Caco-2 (cell line): ENCODE measurements at regions of chr14 and their contacts with region 1.

Region 1: GRCh38 chr14:106844608-106845285 is 1318.4 kb downstream of the TMEM121 start:
- DNase-seq: peak; percentile 55 to 76
- H3K4me3 ChIP-seq: peak overlapping the region; percentile 53
- H3K4me3 Mint-ChIP-seq: peak overlapping the region; percentile 96
- H3K27ac Mint-ChIP-seq: peak overlapping the region; percentile 80
- H3K4me1 ChIP-seq: peaks cover 26% of the 10 kb centered on the region
- H3K4me1 Mint-ChIP-seq: peaks cover 39% of the 10 kb centered on the region
- H3K27me3 ChIP-seq: no peaks in the 10 kb centered on the region
- H3K27me3 Mint-ChIP-seq: no peaks in the 10 kb centered on the region
- CTCF ChIP-seq: no peak

Region 2: GRCh38 chr14:106790189-106791036 is 54.3 kb before region 1 on chr14:
- CTCF ChIA-PET with region 1: no interaction called
- POLR2A ChIA-PET with region 1: no interaction called
- intact Hi-C with region 1: no loop called
- DNase-seq: peak; percentile 86 to 90
- H3K4me3 ChIP-seq: no peak overlapping the region
- H3K4me3 Mint-ChIP-seq: no peak overlapping the region
- H3K27ac Mint-ChIP-seq: no peak overlapping the region
- H3K4me1 ChIP-seq: no peaks in the 10 kb centered on the region
- H3K4me1 Mint-ChIP-seq: no peaks in the 10 kb centered on the region
- H3K27me3 ChIP-seq: no peaks in the 10 kb centered on the region
- H3K27me3 Mint-ChIP-seq: peaks cover 7% of the 10 kb centered on the region
- CTCF ChIP-seq: peak; percentile 71 to 84

Region 3: DNA sequence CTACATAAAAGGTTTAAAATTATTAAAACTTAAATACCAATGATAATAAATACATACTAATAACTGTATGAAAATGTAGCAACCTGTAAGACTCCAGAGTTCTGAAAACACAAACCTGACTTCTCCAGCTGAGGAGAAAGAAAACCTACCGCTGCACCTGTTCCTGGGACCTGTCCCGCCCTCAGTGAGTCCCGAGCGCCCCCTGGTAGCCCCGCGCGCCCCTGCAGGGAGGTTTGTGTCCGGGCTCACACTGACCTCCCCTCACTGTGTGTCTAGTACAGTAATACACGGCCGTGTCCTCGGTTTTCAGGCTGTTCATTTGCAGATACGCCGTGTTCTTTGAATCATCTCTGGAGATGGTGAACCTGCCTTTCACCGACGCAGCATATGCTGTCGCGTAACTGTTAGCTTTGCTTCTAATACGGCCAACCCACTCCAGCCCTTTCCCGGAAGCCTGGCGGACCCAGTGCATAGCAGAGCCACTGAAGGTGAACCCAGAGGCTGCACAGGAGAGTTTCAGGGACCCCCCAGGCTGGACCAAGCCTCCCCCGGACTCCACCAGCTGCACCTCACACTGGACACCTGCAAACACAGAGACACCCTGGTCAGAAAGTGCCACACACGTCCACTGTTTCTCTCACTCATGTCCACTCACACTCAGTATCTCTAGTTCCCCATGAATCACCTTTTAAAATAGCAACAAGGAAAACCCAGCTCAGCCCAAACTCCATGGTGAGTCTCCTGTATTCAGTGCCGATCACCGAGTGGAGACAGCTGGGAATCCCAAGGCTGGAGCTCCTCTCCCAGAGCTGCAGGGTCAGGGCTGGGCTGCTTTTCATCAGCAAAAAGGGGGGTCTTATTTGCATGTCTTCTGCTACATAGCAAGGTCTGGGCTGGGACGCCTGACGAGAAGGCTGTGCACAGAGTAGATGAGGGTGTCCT is 42.1 kb before region 1 on chr14:
- CTCF ChIA-PET with region 1: no interaction called
- POLR2A ChIA-PET with region 1: no interaction called
- intact Hi-C with region 1: loop called (anchors 1 kb)
- DNase-seq: peak; percentile 74 to 84
- H3K4me3 ChIP-seq: peak overlapping the region; percentile 33
- H3K4me3 Mint-ChIP-seq: peak overlapping the region; percentile 68
- H3K27ac Mint-ChIP-seq: no peak overlapping the region
- H3K4me1 ChIP-seq: no peaks in the 10 kb centered on the region
- H3K4me1 Mint-ChIP-seq: no peaks in the 10 kb centered on the region
- H3K27me3 ChIP-seq: no peaks in the 10 kb centered on the region; the same call in 1 of the 2 replicates
- H3K27me3 Mint-ChIP-seq: peaks cover 10% of the 10 kb centered on the region
- CTCF ChIP-seq: peak; percentile 74 to 81

Region 4: DNA sequence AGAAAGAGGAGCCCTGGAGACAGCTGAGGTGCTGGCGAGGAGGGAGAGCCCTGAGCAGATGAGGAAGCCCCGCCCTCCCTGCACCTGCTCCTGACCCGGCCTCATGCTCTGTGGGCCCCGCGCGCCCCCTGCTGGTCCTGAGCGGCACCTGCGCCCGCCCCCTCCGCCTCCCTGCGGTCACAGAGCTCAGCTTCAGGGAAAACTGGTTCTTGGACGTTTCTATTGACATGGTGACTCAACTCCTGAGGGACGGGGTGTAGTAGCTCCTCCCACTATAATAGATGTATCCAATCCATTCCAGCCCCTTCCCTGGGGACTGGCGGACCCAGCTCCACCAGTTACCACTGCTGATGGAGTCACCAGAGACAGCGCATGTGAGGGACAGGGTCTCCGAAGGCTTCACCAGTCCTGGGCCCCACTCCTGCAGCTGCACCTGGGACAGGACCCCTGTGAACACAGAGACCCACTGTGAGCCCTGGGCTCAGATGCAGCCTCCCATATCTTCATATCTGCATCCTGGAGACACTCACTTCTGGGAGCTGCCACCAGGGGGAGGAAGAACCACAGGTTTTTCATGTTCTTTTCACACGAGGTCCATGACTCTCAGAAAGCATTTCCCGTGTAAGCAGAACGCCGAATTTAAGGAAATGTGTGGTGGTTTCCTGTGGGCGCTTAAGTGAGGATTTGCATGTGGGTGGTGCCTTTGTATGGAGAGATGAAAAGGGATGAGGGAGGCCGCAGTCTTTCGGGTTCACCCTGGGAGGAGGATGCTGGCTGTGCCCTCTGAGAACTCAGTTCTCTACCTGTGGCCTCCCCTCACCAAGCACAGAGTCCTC is 28.1 kb after region 1 on chr14:
- CTCF ChIA-PET with region 1: interaction called, 23 read pairs
- POLR2A ChIA-PET with region 1: no interaction called
- intact Hi-C with region 1: loop called (anchors 1 kb)
- DNase-seq: peak; percentile 91 to 95
- H3K4me3 ChIP-seq: no peak overlapping the region
- H3K4me3 Mint-ChIP-seq: peak overlapping the region; percentile 62
- H3K27ac Mint-ChIP-seq: peak overlapping the region; percentile 48
- H3K4me1 ChIP-seq: peaks cover 36% of the 10 kb centered on the region
- H3K4me1 Mint-ChIP-seq: peaks cover 15% of the 10 kb centered on the region
- H3K27me3 ChIP-seq: no peaks in the 10 kb centered on the region
- H3K27me3 Mint-ChIP-seq: no peaks in the 10 kb centered on the region
- CTCF ChIP-seq: peak; percentile 59 to 90